Lower leg skin (tissue), 4 donors: ENCODE measurements at regions of chr4 and their contacts with region 1.

Region 1: GRCh38 chr4:182222766-182223165 is 20.4 kb upstream of the TENM3 start:
- DNase-seq: no peak
- H3K4me3 ChIP-seq: no peak overlapping the region
- CTCF ChIP-seq: no peak
- POLR2A ChIP-seq: no peak

Region 2: GRCh38 chr4:182203872-182204411 is 18.8 kb before region 1 on chr4:
- intact Hi-C with region 1: loop called (anchors 2 kb)
- DNase-seq: no peak
- H3K4me3 ChIP-seq: no peak overlapping the region
- CTCF ChIP-seq: no peak
- POLR2A ChIP-seq: no peak